ENCODE measurements at regions of chr9 and their contacts with region 1.

Region 1: GRCh38 chr9:136939996-136940525 is 4.5 kb downstream of the FBXW5 start:
- DNase-seq: peak; percentile 85
- H3K4me3 ChIP-seq: peak overlapping the region; percentile 36
- H3K27ac ChIP-seq: peak overlapping the region; percentile 82
- H3K4me1 ChIP-seq: peaks cover 52% of the 10 kb centered on the region
- H3K27me3 ChIP-seq: no peaks in the 10 kb centered on the region
- CTCF ChIP-seq: no peak

Region 2: DNA sequence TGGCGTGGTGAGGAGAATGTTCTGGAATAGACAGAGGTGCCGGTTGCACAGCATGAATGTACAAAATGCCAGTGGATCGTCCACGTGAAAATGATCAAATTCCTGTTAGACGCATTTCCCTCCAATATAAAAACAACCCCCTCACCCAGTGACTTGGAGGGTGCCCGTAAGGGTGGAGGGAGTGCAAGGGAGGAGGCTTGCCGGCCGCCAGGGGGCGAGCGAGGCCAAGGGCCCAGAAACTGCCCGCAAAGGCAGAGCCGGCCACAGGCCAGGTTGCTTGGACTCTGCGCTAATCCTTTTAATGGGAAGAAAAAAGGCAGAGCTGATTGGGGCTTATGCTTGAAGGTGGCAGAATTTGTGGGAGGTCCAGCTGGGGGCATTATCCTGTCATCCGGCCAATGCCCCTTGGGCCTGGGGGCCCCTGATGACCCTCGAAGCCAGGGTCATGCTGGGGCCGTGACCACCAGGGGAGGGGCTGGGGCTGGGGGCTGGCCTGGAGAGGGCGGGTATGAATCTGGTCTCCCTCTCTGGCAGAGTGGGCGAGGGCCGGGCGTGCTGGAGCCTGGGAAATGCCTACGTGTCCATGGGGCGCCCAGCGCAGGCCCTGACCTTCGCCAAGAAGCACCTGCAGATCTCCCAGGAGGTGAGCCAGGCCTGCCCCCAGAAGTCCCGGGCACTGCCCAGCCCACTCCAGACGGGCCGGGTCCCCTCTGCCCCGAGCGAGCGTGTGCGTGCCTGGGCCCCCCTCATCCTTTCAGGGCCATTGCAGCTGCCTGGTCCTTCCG is 600.7 kb before region 1 on chr9:
- intact Hi-C with region 1: no loop called
- DNase-seq: peak; percentile 72
- H3K4me3 ChIP-seq: no peak overlapping the region
- H3K27ac ChIP-seq: peak overlapping the region; percentile 96
- H3K4me1 ChIP-seq: peaks cover 49% of the 10 kb centered on the region
- H3K27me3 ChIP-seq: no peaks in the 10 kb centered on the region
- CTCF ChIP-seq: peak; percentile 86

Region 3: DNA sequence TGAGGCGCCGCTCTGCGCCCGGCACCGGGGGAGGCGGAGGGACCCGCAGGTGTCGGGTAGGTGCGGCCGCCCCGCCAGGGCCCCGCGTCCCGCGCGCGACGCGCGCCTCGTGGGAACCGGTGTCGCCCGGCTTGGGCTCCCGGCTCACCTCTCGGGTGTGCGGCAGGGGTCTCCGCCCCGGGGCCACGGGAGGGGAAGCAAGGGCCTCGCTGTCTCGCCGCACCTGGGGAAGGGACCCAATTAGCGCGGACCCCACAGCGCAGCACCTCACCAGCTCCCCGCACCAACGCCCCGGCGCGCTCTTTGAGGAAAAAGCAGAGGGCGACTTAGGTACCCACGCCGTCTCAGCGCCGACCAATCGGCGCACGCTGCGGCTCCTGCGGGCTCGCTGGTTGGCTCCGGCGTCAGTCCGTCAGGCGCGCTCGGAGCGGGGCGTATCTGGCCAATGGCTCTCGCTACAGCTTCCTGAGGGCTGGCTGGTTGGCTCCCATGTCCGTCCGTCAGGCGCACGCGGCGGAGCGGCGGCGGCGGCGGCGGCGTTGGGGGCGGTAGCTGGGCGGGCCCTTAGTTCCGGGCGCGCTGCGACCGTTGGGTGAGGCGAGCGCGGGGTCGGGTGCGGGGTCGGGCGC is 54.0 kb before region 1 on chr9 and contains the start of gene TRAF2:
- intact Hi-C with region 1: loop called (anchors 10 kb)
- DNase-seq: peak; percentile 99
- H3K4me3 ChIP-seq: peak within 1 kb of the TSS; percentile 99
- H3K27ac ChIP-seq: peak within 1 kb of the TSS; percentile 85
- H3K4me1 ChIP-seq: peaks cover 44% of the 10 kb centered on the region
- H3K27me3 ChIP-seq: no peaks in the 10 kb centered on the region
- CTCF ChIP-seq: no peak
- total RNA-seq, gene TRAF2: 10.0 TPM

Measured in left ventricle myocardium inferior (tissue), 1 donor.